ENCODE measurements at regions of chr1 and their contacts with region 1.

Region 1: GRCh38 chr1:205812878-205813754 is at the start of gene SLC41A1:
- DNase-seq: peak; percentile 91 to 94
- ATAC-seq: peak; percentile 88 to 95 (median 92)
- H3K4me3 ChIP-seq: peak within 1 kb of the TSS; percentile 65 to 93 (median 77)
- H3K27ac ChIP-seq: peak within 1 kb of the TSS; percentile 69 to 95 (median 92)
- H3K4me1 ChIP-seq: peaks cover 0 to 73% (median 38%) of the 10 kb centered on the region in 9 donors
- H3K27me3 ChIP-seq: peaks cover 0 to 8% (median 0%) of the 10 kb centered on the region in 7 donors
- CTCF ChIP-seq: no peak
- total RNA-seq, gene SLC41A1: 247 to 566 (median 322) TPM

Region 2: DNA sequence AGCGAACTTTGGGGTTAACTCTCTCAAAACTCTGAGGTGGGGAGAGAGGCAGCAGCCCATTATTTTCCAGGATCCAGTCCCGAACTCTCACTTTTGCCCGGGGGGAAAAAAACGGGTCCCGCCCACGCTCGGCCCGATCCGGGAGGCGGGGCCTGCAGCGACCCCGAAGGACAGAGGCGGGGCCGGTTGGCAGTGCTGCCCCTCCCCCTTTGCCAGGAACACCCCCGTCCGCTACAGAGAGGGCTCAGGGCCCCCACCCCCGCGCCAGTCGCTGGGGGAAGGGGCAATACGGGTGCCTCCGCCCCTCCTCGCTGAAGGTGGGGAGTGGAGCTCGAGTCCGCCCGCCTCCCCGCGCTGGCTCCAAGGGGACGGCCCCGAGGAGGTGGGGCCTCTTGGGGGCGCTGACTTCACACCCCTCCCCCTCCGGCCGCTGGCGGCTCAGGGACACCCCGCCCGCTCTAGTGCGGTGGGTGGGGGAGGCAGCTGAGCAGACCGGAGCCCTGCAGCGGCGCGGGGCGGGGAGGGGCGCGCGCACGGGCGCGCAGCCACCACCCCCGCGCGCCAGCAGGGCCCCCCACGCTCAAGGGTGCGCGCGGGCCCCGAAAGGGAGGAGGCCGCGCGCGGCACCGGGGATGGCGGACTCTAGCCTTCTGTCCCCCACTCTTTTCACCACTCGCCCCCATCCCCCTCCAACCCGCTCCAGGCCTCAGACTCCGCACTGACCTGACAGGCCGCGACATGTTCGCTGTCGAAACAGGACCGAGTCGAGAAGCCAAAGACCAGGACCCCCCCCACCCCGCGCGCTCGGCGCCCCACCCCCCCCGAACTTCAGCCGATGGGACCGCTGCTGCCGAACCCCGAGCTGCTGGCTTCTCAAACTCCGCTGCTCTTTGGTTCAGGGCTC is 63.6 kb before region 1 on chr1:
- intact Hi-C with region 1: loop called in 1 of 10 experiments (anchors 2 kb)
- DNase-seq: peak; percentile 95 to 96
- ATAC-seq: peak; percentile 91 to 95 (median 93)
- H3K4me3 ChIP-seq: peak overlapping the region; percentile 53 to 93 (median 78)
- H3K27ac ChIP-seq: peak overlapping the region; percentile 90 to 98 (median 95)
- H3K4me1 ChIP-seq: peaks cover 4 to 43% (median 37%) of the 10 kb centered on the region in 9 donors
- H3K27me3 ChIP-seq: no peaks in the 10 kb centered on the region
- CTCF ChIP-seq: peak in 2 of 9 donors; percentile 10 to 20

Region 3: DNA sequence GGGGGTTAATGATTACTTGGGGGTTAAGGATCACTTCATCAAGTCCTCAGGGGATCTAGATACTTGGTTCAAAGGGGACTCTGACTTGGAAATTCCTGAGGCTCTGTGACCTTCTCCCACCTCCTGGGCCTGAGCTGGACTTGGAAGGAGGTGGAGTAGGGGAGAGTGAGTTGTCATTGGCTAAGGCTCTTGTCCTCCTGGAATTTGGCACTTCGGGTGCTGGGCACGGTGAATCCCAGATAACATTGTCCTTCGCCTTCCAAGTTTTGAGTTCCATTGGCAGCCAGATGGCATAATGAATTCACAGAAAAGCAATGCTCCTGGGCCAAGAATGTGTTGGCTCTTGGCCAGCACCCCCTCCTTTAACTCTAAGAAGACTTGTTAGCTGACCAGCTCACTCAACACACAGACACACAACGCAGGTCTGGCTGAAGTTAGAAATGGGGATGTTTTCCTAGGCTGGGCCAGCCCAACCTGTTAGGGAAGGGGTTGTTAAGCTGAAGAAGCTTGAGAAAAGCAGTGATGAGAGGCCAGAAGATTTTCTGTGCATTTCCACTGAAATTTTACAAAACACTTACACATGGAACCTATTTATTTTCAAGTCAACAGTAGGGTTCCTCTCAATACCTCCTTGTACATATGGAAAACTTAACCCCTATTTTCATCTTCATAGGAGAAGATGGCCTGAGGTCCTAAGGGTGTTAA is 100.5 kb after region 1 on chr1:
- intact Hi-C with region 1: loop called in 5 of 10 experiments (anchors 5 kb)
- DNase-seq: peak; percentile 67 to 70
- ATAC-seq: peak; percentile 44 to 75 (median 60)
- H3K4me3 ChIP-seq: no peak overlapping the region
- H3K27ac ChIP-seq: peak overlapping the region; percentile 58 to 90 (median 83)
- H3K4me1 ChIP-seq: peaks cover 8 to 62% (median 25%) of the 10 kb centered on the region in 9 donors
- H3K27me3 ChIP-seq: no peaks in the 10 kb centered on the region
- CTCF ChIP-seq: no peak